SK-N-SH (cell line): ENCODE measurements at regions of chr1 and their contacts with region 1.

Region 1: GRCh38 chr1:60989749-60990713 is 92.3 kb upstream of the NFIA start:
- DNase-seq: peak; percentile 50
- H3K4me3 ChIP-seq: peak overlapping the region; percentile 6 to 21; a peak in 3 of 4 replicates
- H3K27ac ChIP-seq: peak overlapping the region; percentile 90 to 93
- H3K4me1 ChIP-seq: peaks cover 19 to 36% of the 10 kb centered on the region in 2 experiments; a peak in 3 of 4 replicates
- H3K27me3 ChIP-seq: no peaks in the 10 kb centered on the region
- CTCF ChIP-seq: no peak
- EP300 ChIP-seq: peak; percentile 8 to 77; a peak in 3 of 4 replicates
- RAD21 ChIP-seq: no peak

Region 2: DNA sequence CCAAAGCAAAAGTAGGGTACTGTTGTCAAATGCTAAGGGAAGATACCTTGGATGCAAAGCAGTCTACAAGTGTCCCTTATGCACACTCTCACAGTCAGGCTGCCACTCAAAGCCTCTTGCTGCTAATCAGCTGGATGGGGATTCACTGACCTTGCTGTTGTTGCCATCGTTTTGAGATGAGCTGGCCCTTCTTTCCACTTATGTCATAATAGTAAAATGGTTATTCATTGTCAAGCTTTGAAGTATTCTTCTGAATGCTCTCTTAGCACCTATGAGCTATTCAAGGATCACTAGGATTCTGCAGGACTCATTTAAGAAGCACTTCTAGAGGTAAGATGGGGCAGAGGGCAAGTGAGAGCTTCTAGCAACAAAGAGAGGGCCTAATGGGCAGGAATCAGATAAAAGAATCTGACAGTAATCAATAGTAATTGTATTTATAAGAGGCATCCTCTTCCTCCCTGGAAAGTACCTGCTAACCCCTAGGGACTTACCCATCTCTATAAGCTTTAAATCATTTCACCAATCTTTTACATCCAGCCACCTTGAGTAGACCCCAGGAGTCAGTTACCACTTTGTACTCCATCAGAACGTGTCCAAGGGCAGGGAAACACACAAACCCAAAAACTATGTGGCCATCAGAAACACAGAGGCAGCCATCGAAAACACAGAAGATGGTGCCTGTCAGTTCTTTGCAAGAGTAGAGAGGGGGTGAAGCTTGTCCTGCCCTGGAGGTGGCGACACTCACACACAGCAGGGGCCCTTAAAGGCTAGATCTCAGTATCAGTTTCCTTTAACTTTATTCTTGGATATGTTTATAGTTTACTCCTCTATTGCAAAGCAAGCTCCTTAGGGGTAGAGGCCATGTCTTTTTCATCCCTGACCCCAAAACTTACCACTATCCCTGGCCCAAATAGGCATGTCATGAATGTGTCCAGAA is 11.3 kb before region 1 on chr1:
- CTCF ChIA-PET with region 1: interaction called, 43 read pairs
- POLR2A ChIA-PET with region 1: no interaction called
- DNase-seq: peak; percentile 32
- H3K4me3 ChIP-seq: no peak overlapping the region
- H3K27ac ChIP-seq: no peak overlapping the region
- H3K4me1 ChIP-seq: peaks cover 0 to 12% of the 10 kb centered on the region in 2 experiments; a peak in 3 of 4 replicates
- H3K27me3 ChIP-seq: no peaks in the 10 kb centered on the region
- CTCF ChIP-seq: peak; percentile 72
- EP300 ChIP-seq: no peak
- RAD21 ChIP-seq: peak; percentile 82